Transverse colon (tissue), 4 donors: ENCODE measurements at regions of chr12 and their contacts with region 1.

Region 1: GRCh38 chr12:10205251-10205807 is 7.3 kb upstream of the GABARAPL1 start:
- DNase-seq: no peak
- H3K4me3 ChIP-seq: no peak overlapping the region
- H3K27ac ChIP-seq: no peak overlapping the region
- H3K4me1 ChIP-seq: no peaks in the 10 kb centered on the region
- H3K27me3 ChIP-seq: no peaks in the 10 kb centered on the region
- CTCF ChIP-seq: no peak
- EP300 ChIP-seq: no peak
- POLR2A ChIP-seq: no peak

Region 2: DNA sequence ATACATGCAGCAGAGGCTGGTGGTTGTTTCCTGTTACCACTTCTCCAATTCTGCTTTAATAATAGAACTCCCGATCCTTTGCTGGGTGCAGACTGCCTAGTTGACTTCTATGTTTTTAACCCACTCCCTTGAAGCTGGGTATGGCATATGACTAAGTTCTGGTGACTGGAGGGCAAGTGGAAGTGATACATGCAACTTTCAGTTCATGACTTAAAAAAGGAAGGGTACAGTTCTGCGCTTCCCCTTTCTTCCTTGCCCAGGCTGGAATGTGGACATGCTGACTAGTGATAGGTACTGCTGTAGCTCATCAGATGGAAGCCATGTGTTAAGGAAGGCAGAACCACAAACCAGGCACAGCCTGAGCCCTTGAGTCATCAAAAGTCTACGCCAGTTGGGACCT is 1087.2 kb before region 1 on chr12:
- in situ Hi-C with region 1: no loop called
- intact Hi-C with region 1: loop called (anchors 10 kb)
- DNase-seq: no peak
- H3K4me3 ChIP-seq: no peak overlapping the region
- H3K27ac ChIP-seq: peak overlapping the region; percentile 74 to 84 (median 76)
- H3K4me1 ChIP-seq: peaks cover 0 to 33% (median 2%) of the 10 kb centered on the region in 4 donors
- H3K27me3 ChIP-seq: no peaks in the 10 kb centered on the region
- CTCF ChIP-seq: no peak
- EP300 ChIP-seq: no peak
- POLR2A ChIP-seq: no peak